Lower leg skin (tissue), 4 donors: ENCODE measurements at regions of chr2 and their contacts with region 1.

Region 1: DNA sequence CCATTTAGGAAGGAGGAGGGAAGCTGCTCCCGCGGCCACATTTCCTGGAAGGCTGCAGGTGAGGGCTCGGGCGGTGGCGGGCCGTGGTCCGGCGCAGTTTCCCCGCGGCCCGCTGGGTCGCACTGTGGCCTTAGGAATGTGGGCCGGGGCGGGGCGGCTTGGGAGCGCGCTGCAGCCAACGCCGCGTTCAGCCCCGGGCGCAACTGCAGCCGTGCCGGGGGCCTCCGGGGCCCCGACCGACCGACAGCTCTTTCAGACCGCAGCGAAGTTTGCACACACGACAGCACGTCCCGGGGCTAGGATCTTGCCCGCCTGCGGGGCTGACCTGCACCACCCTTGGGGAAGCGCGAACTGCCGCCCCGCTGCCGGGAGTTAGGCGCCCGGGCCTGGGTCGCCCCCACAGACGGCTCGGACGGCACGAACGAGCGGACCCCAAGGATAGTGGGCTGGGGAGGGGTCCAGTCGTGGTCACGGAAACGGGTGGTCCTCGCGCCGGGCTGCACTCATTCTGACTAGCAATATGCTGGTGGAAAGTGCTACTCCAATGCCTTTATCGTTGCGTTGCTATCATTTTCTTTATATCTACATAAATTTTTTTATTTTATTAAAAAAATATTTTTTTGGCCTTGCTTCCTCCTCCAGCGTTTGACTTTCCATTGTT is 69.9 kb upstream of the DLX2 start:
- DNase-seq: peak; percentile 50 to 91
- H3K4me3 ChIP-seq: no peak overlapping the region
- CTCF ChIP-seq: no peak
- POLR2A ChIP-seq: no peak

Region 2: GRCh38 chr2:172102391-172103278 is 70.0 kb before region 1 on chr2 and contains the start of gene DLX2:
- intact Hi-C with region 1: no loop called
- DNase-seq: peak; percentile 74 to 95
- H3K4me3 ChIP-seq: peak within 1 kb of the TSS; percentile 24
- CTCF ChIP-seq: no peak
- POLR2A ChIP-seq: no peak
- total RNA-seq, gene DLX2: 0.17 to 0.42 (median 0.19) TPM in 3 of 4 donors, not detected in the other

Region 3: GRCh38 chr2:172461591-172462372 is 289.1 kb after region 1 on chr2:
- intact Hi-C with region 1: loop called (anchors 2 kb)
- DNase-seq: peak in 1 of 2 donors; percentile 90
- H3K4me3 ChIP-seq: no peak overlapping the region
- CTCF ChIP-seq: no peak
- POLR2A ChIP-seq: no peak